Naive thymus-derived CD4-positive, alpha-beta T cell (primary cell): ENCODE measurements at regions of chr1 and their contacts with region 1.

Region 1: DNA sequence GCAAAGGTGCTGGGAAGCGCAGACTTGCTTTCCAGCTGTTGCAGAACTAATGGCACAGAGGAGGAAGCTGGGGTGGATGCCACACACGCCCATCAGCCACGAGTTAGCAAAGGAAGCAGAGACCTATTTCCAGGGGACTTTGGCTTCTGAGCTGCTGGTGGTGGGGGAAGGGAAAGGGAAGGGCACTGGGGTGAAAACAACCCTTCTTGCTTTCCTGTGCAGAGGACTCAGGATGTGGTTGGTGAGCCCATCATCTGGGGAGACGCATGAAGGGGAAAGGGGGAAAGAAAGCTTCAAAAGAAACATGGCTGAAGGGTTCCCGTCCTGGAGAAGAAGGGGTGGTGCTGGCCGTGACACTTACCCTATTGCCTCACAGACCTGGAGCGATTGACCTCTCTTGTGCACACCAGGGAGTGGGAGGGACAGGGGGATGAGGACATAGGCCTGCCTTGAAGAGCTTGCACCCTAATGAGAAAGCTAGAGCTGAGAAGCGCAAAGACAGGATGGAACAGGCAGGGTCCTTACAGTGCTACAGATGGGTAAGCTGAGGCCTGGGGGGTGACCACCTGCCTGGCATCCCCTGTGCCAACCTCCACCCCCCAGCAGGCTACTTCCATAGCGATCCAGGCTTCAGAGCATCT is 140.8 kb upstream of the RAB4A start:
- DNase-seq: peak in 6 of 9 donors; percentile 55 to 82 (median 62)
- ATAC-seq: peak; percentile 71
- H3K4me3 ChIP-seq: peak overlapping the region; percentile 29
- H3K4me3 Mint-ChIP-seq: peak overlapping the region in 9 of 10 donors; percentile 39 to 83 (median 69)
- H3K27ac ChIP-seq: no peak overlapping the region
- H3K27ac Mint-ChIP-seq: peak overlapping the region in 8 of 9 donors; percentile 15 to 93 (median 80)
- H3K4me1 ChIP-seq: peaks cover 41 to 46% of the 10 kb centered on the region in 2 donors
- H3K4me1 Mint-ChIP-seq: peaks cover 26 to 90% (median 67%) of the 10 kb centered on the region in 7 donors
- H3K27me3 ChIP-seq: no peaks in the 10 kb centered on the region
- H3K27me3 Mint-ChIP-seq: peaks cover 0 to 52% (median 0%) of the 10 kb centered on the region in 5 donors

Region 2: GRCh38 chr1:228860911-228861831 is 269.0 kb before region 1 on chr1:
- CTCF ChIA-PET with region 1: no interaction called
- POLR2A ChIA-PET with region 1: no interaction called
- intact Hi-C with region 1: loop called in 1 of 2 experiments (anchors 10 kb)
- DNase-seq: no peak
- ATAC-seq: no peak
- H3K4me3 ChIP-seq: no peak overlapping the region
- H3K4me3 Mint-ChIP-seq: peak overlapping the region in 1 of 10 donors; percentile 26
- H3K27ac ChIP-seq: no peak overlapping the region
- H3K27ac Mint-ChIP-seq: peak overlapping the region in 1 of 9 donors; percentile 37
- H3K4me1 ChIP-seq: peaks cover 0 to 18% of the 10 kb centered on the region in 2 donors
- H3K4me1 Mint-ChIP-seq: peaks cover 17 to 42% (median 40%) of the 10 kb centered on the region in 7 donors
- H3K27me3 ChIP-seq: no peaks in the 10 kb centered on the region
- H3K27me3 Mint-ChIP-seq: peaks cover 0 to 30% (median 0%) of the 10 kb centered on the region in 5 donors

Region 3: DNA sequence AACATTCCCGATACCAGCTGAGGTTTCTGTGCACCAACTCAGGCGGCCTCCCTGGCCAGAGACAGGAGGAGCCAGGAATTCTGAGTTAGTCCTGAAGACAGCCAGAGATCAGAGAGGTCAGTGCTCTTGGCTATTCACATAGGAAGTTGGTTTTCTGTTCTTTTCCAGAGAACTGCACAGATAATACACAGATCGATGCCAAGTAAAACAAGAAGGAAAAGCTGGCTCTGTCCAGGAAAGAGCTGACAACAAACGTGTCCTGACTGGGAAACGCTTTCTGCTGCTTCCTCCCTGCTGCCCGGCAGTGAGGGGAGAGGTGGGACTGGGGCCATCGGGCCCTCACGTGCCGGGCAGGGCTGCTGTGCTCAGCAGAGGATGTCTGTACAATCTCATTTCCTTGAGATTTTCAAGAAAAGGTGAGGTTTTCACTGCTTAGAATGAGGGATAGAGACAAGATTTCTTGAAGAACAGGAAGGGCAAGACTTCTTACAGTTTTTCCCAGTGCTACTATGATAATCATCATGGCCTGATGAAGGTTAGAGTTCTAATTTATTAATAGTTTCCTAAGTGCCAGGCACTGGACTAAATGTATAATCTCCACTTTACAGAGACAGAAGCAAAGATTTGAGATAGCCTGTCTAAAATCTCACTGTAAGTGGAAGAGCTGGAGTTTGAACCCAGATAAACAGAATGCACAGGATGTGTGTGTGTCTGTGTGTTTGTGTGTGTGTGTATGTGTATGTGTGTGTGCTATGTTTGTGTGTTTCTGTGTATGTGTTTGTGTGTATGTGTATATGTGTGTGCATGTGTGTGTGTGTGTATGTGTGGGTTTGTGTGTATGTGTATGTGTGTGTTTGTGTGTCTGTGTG is 70.2 kb before region 1 on chr1:
- CTCF ChIA-PET with region 1: interaction called, 3 read pairs
- POLR2A ChIA-PET with region 1: no interaction called
- intact Hi-C with region 1: loop called in 1 of 2 experiments (anchors 5 kb)
- DNase-seq: peak in 1 of 9 donors; percentile 10
- ATAC-seq: no peak
- H3K4me3 ChIP-seq: no peak overlapping the region
- H3K4me3 Mint-ChIP-seq: peak overlapping the region in 8 of 10 donors; percentile 2 to 85 (median 44)
- H3K27ac ChIP-seq: no peak overlapping the region
- H3K27ac Mint-ChIP-seq: peak overlapping the region in 8 of 9 donors; percentile 0 to 80 (median 42)
- H3K4me1 ChIP-seq: peaks cover 30 to 43% of the 10 kb centered on the region in 2 donors
- H3K4me1 Mint-ChIP-seq: peaks cover 25 to 75% (median 63%) of the 10 kb centered on the region in 7 donors
- H3K27me3 ChIP-seq: no peaks in the 10 kb centered on the region
- H3K27me3 Mint-ChIP-seq: peaks cover 0 to 15% (median 0%) of the 10 kb centered on the region in 5 donors

Region 4: GRCh38 chr1:229075217-229075616 is 54.9 kb before region 1 on chr1:
- CTCF ChIA-PET with region 1: no interaction called
- POLR2A ChIA-PET with region 1: no interaction called
- intact Hi-C with region 1: no loop called
- DNase-seq: no peak
- ATAC-seq: no peak
- H3K4me3 ChIP-seq: no peak overlapping the region
- H3K4me3 Mint-ChIP-seq: no peak overlapping the region
- H3K27ac ChIP-seq: no peak overlapping the region
- H3K27ac Mint-ChIP-seq: no peak overlapping the region
- H3K4me1 ChIP-seq: no peaks in the 10 kb centered on the region
- H3K4me1 Mint-ChIP-seq: peaks cover 0 to 15% (median 12%) of the 10 kb centered on the region in 7 donors
- H3K27me3 ChIP-seq: no peaks in the 10 kb centered on the region
- H3K27me3 Mint-ChIP-seq: peaks cover 0 to 9% (median 0%) of the 10 kb centered on the region in 5 donors

Region 5: GRCh38 chr1:229420765-229421164 is 290.6 kb after region 1 on chr1:
- CTCF ChIA-PET with region 1: no interaction called
- POLR2A ChIA-PET with region 1: no interaction called
- intact Hi-C with region 1: no loop called
- DNase-seq: no peak
- ATAC-seq: no peak
- H3K4me3 ChIP-seq: no peak overlapping the region
- H3K4me3 Mint-ChIP-seq: no peak overlapping the region
- H3K27ac ChIP-seq: no peak overlapping the region
- H3K27ac Mint-ChIP-seq: no peak overlapping the region
- H3K4me1 ChIP-seq: no peaks in the 10 kb centered on the region
- H3K4me1 Mint-ChIP-seq: no peaks in the 10 kb centered on the region
- H3K27me3 ChIP-seq: no peaks in the 10 kb centered on the region
- H3K27me3 Mint-ChIP-seq: peaks cover 20 to 34% (median 27%) of the 10 kb centered on the region in 5 donors